GM10248 (cell line): ENCODE measurements at regions of chr10 and their contacts with region 1.

Region 1: DNA sequence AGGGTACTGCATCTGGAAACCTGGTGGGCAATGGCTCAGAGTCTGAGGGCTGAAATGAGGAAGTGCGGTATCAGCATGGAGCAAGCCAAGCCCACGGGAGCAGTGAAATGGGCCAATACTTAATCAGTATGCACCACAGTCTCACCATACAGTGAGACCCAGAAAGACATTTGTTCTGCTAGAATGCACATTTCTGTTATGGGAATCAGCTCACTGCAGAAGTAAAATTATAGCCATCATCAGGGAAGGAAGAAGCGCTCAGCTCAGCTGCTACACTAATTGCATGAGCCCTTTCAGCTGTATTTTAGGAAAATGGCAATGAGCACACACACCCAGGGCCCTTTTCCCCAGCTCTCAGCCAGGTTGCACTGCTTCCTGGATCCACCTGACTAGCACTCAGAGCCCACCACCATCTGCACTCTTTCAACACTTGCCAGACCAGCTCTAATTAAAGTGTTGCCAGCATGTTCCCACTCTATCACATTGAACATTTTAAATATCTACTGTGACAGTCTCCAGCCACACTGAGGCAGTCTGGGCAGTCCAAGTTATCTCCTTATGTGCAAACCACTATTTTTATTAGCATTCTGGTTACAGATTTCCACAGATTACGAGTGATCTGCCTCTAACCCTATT is 44.2 kb upstream of the PIK3AP1 start:
- DNase-seq: peak; percentile 32
- CTCF ChIP-seq: no peak

Region 2: GRCh38 chr10:96830511-96831199 is 66.1 kb after region 1 on chr10:
- CTCF ChIA-PET with region 1: interaction called, 10 read pairs
- POLR2A ChIA-PET with region 1: no interaction called
- DNase-seq: peak; percentile 68
- CTCF ChIP-seq: peak; percentile 82